ENCODE measurements at regions of chr9 and their contacts with region 1.

Region 1: DNA sequence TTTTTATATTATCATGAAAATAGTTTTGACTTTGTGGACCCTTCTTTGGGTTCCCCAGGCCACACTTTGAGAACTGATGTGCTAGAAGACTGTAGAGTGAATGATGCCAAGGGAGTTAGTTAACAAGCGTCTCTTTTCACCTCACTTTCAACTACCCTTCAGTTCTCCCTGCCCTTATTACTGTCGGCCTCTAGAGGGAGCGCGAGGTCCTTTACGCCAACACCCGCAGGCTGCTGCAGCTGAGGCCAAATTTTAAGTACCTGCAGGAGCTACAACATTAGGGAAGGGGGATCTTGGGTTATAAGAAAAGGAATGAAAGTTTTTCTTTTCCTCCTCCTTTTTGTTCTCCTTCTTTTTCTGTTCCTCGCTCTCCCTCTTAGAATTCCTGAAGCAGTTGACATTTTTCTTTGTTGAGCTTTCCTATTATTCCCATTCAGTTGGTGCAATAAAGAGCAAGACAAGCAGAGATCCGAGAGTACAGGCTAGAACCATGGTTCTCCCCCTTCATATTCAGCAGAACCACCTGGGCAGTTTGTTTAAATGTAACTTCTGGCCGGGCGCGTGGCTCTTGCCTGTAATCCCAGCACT is 84.0 kb downstream of the ZFAND5 start:
- DNase-seq: peak; percentile 50
- H3K4me3 ChIP-seq: no peak overlapping the region
- H3K27ac ChIP-seq: no peak overlapping the region
- H3K4me1 ChIP-seq: no peaks in the 10 kb centered on the region
- H3K27me3 ChIP-seq: no peaks in the 10 kb centered on the region
- CTCF ChIP-seq: peak; percentile 90 to 97

Region 2: DNA sequence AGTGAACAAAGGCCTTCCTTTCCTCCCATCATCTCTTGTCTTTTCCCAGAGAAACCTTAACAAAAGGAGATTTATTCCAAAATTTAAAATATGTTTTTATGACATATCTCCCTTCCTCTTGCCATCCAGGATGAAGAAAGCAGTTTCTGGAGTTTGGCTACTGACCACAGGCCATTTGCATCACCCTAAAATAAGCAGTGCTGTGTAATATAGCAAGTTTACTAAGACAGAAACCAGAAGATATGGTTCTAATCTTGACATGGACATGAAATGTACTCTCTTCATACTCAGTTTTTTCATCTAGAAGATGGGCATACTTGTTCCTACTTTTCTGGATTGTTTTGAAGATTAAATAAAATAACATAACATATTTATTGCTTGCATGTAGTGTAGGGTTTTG is 134.2 kb after region 1 on chr9:
- CTCF ChIA-PET with region 1: no interaction called
- dilution Hi-C with region 1: no loop called
- in situ Hi-C with region 1: no loop called
- intact Hi-C with region 1: no loop called
- DNase-seq: no peak
- H3K4me3 ChIP-seq: no peak overlapping the region
- H3K27ac ChIP-seq: no peak overlapping the region
- H3K4me1 ChIP-seq: no peaks in the 10 kb centered on the region
- H3K27me3 ChIP-seq: no peaks in the 10 kb centered on the region
- CTCF ChIP-seq: no peak

Region 3: GRCh38 chr9:72592502-72593403 is 311.7 kb after region 1 on chr9:
- CTCF ChIA-PET with region 1: no interaction called
- dilution Hi-C with region 1: loop called (anchors 5 kb)
- in situ Hi-C with region 1: loop called (anchors 5 kb)
- intact Hi-C with region 1: loop called (anchors 1 kb)
- DNase-seq: peak; percentile 46
- H3K4me3 ChIP-seq: no peak overlapping the region
- H3K27ac ChIP-seq: no peak overlapping the region
- H3K4me1 ChIP-seq: no peaks in the 10 kb centered on the region
- H3K27me3 ChIP-seq: no peaks in the 10 kb centered on the region
- CTCF ChIP-seq: peak; percentile 66 to 72

Region 4: DNA sequence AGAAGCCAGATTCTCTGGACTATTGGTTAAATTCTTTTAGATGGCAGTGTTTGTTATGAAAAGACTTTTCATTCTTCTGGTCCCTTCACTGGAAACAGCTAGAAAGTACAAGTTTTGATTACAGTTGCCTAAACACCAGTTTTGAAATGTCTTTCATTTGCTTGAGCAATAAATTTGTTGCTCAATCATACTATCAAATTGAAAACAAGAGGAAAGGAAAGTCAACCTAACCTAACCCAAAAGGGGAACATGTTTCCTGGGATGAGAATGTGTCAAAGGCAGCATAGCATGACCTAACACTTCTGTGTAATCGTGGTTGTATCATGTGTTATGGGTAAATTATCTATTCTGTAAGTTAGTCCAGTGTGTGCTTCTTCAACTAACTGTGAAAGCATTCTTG is 453.6 kb after region 1 on chr9:
- CTCF ChIA-PET with region 1: no interaction called
- dilution Hi-C with region 1: no loop called
- in situ Hi-C with region 1: loop called in 1 of 2 experiments (anchors 25 kb)
- intact Hi-C with region 1: no loop called
- DNase-seq: no peak
- H3K4me3 ChIP-seq: no peak overlapping the region
- H3K27ac ChIP-seq: no peak overlapping the region
- H3K4me1 ChIP-seq: no peaks in the 10 kb centered on the region
- H3K27me3 ChIP-seq: no peaks in the 10 kb centered on the region
- CTCF ChIP-seq: no peak

Region 5: GRCh38 chr9:72827950-72828731 is 547.1 kb after region 1 on chr9:
- CTCF ChIA-PET with region 1: no interaction called
- dilution Hi-C with region 1: loop called (anchors 25 kb)
- in situ Hi-C with region 1: loop called (anchors 5 to 10 kb)
- intact Hi-C with region 1: no loop called
- DNase-seq: peak; percentile 90
- H3K4me3 ChIP-seq: no peak overlapping the region
- H3K27ac ChIP-seq: peak overlapping the region; percentile 72
- H3K4me1 ChIP-seq: peaks cover 16% of the 10 kb centered on the region
- H3K27me3 ChIP-seq: no peaks in the 10 kb centered on the region
- CTCF ChIP-seq: no peak

Region 6: DNA sequence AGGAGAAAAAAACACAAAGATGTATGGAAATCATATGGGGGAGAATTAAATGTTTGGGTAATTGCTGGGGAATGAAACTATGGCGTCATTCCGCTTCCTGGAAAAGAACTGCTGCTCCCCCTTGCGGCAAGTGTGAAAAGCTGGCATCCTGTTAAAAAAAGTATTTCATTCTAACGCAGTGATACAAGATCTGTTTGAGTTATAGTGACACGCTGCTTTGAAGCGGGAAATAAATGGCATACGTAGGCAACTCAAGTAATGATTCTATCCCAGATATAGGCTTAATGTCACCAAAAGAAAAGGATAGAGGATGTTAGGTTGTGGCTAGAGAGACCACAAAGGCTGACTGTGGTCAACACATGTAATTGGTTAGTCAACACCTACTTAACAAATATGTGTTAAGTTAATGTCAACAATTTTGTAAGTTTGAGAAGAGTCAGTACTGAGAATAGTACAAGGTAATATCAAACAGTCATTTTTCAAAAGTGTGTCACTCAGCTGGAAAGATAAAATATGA is 742.1 kb after region 1 on chr9:
- CTCF ChIA-PET with region 1: no interaction called
- dilution Hi-C with region 1: no loop called
- in situ Hi-C with region 1: no loop called
- intact Hi-C with region 1: loop called (anchors 1 kb)
- DNase-seq: peak; percentile 48
- H3K4me3 ChIP-seq: no peak overlapping the region
- H3K27ac ChIP-seq: no peak overlapping the region
- H3K4me1 ChIP-seq: no peaks in the 10 kb centered on the region
- H3K27me3 ChIP-seq: no peaks in the 10 kb centered on the region
- CTCF ChIP-seq: peak; percentile 87